Gastrocnemius medialis (tissue), 4 donors: ENCODE measurements at regions of chr19 and their contacts with region 1.

Region 1: DNA sequence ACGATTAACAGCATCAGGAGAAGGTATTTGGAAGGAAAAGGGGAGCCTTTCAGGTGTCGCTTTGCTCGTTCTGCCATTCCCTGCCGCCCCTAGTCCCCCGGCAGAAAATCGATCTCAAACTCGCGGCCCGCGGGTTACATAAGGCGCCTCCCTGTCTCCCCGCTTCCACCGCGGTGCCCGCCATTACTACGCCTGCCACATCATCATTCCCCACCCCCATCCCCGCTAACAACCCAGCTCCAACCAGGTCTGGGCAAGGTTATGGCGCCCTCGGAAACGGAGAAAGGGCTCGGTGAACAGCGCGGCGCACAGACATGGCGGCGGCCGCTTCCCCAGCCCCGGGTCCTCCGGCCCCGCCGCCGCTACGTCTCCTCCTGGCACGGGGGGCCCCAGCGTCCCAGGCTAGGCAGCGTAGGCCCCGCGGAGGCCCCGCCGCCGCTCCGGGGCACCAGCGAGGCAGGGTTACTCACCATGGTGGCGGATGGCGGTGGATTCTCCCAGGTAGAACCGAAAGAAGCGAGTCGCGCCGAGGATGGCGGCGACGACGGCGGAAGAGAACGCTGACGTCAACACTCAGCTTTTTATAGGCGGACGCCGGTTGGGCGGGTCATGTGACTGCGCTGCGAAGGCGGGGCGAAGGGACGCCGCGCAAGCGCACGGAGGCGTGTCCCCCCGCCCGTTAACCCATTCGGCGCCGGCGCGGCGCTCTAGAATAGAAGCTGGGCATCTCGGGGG is at the start of gene EEF2:
- DNase-seq: peak; percentile 77 to 86
- ATAC-seq: peak; percentile 49 to 61
- H3K4me3 ChIP-seq: peak within 1 kb of the TSS; percentile 79 to 99 (median 80)
- H3K27ac ChIP-seq: peak within 1 kb of the TSS; percentile 89 to 100 (median 92)
- H3K4me1 ChIP-seq: peaks cover 39 to 44% of the 10 kb centered on the region in 2 donors
- H3K27me3 ChIP-seq: no peaks in the 10 kb centered on the region
- CTCF ChIP-seq: peak in 1 of 5 experiments; percentile 28
- POLR2A ChIP-seq: peak; percentile 100
- total RNA-seq, gene EEF2: 1,701 to 2,714 (median 2,440) TPM

Region 2: DNA sequence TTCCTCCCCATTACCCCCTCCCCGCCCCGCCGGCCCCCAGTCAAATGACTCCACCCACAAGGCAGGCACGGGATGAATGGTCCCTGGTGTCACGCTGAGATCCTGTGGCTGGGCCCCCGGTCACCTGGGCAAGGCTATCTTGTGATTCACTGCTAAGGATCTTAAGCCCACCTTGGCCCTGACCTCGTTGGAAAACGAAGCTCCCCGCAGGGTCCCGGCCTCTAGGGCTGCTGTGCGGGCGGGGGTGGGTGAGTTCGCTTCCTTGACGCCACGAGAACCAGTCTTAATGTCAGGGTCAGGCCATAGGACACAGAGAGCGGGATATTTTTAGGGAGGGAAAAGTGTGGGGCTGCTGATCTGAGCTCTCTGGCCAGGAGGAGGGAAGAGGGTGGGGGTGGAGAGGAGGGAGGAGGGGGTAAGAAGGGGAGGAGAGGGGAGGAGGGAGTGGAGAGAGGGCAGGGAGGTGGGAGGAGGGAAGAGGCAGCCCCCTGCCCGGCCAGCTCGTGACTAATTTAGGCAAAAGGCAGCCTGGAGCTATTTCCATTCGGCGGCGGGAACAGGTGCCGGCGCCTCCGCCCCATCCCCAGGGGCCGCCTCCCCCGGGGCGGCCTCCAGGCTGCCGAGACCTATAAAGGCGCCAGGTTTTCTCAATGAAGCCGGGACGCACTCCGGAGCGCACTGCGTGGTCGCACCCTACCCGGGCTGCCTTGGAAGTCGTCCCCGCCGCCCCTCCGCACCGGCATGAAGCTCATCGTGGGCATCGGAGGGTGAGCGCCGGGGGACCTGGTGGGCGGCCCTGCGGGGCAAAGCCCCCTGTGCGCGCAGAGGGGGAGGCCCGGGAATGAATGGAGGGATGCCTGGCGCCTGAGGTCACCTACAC is 51.9 kb before region 1 on chr19 and contains the start of gene NMRK2:
- in situ Hi-C with region 1: no loop called
- intact Hi-C with region 1: loop called (anchors 2 kb)
- DNase-seq: peak; percentile 65 to 86
- ATAC-seq: peak; percentile 51 to 56
- H3K4me3 ChIP-seq: peak within 1 kb of the TSS in 3 of 4 donors; percentile 34 to 41 (median 38)
- H3K27ac ChIP-seq: peak within 1 kb of the TSS; percentile 85 to 92 (median 89)
- H3K4me1 ChIP-seq: peaks cover 0 to 14% of the 10 kb centered on the region in 2 donors
- H3K27me3 ChIP-seq: no peaks in the 10 kb centered on the region
- CTCF ChIP-seq: no peak
- POLR2A ChIP-seq: peak; percentile 42 to 58
- total RNA-seq, gene NMRK2: 46.3 to 168 (median 106) TPM

Region 3: DNA sequence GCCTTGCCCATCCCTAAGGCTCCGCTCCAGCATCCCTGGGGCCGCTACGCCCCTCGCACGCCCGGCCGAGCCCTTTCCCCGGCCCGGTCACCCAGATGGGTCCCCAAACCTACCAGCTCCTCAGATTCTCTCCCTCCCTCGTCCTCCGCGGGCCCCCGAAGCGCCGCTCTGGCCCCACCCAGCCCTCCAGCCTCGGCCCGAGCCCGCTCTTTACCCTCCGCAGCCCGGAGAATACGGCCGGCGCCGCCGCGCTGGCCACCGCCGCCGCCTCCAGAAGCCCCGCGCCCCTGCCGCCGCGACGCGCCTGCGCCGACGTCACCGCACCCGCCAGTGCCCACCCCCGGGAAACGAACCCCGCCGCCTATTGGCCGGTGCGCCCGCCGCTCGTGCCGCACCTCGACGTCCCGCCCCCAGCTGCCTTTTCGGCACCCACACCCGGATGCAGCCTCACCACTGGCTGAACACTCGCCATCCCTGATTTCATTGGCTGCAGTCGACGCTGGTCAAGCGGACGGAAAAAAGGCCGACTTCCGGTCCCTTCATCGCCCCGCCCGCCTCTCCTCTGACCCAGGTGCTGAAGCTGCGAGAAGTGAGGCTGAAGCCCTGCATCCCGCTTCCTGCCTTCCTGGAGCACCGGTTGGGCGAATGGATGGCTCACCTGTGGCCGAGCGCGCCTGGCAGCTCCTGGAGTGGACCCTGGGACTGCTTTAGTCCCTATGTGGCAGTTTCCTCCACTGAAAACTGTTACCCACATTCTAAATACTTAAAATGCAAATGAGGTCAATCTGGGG is 14.1 kb before region 1 on chr19 and contains the start of gene DAPK3:
- in situ Hi-C with region 1: no loop called
- intact Hi-C with region 1: loop called (anchors 1 kb)
- DNase-seq: peak; percentile 98
- ATAC-seq: peak; percentile 74 to 78
- H3K4me3 ChIP-seq: peak within 1 kb of the TSS; percentile 79 to 98 (median 90)
- H3K27ac ChIP-seq: peak within 1 kb of the TSS; percentile 97 to 100 (median 98)
- H3K4me1 ChIP-seq: peaks cover 42 to 43% of the 10 kb centered on the region in 2 donors
- H3K27me3 ChIP-seq: no peaks in the 10 kb centered on the region
- CTCF ChIP-seq: peak in 3 of 5 experiments; percentile 20 to 42 (median 26)
- POLR2A ChIP-seq: peak; percentile 100
- total RNA-seq, gene DAPK3: 61.3 to 135 (median 115) TPM

Region 4: DNA sequence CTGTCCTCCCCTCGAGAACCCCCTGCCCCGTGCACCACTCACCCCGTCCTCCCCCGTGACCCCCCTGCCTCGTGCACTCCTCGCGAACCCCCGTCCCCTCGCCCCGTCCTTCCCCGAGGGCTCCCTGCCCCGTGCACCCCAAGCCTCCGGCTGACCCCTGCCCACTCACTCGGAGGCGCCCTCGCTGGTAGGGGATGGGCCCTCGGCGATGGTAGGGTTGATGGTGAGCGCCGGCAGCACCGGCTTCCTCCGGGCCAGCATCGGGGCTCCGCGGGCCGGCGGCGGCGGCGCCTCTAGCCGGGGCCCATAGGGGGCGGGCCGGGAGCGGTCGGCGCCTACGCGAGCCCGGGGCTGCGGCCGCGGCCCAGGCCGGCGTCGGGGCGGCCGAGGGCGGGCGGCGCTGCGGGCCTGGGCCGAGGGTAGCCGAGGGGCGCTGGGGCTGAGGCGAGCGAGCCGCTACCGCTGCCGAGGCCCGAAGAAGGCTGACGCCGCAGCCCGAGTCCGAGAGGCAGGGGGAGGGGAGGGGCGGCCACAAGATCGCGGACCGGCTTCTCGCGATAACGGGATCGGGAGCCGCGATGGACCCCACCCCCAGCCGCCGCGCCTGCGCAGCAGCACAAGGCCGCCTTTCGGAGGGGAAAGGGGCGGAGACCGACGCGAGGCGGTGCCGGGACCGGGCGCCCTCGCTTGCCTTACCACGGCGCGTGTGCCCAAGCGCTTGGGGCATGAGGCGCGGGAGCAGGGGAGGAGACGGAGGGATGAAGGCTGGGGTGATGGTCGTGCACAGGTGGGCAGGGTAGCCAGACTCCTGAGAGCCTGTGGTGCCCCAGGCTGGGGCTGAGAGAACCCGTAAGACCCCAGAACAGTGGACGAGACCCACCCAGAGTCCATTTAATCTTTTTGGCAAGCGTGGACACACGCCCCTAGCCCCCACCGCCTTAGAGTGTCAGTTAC is 138.8 kb after region 1 on chr19 and contains the start of gene MAP2K2:
- in situ Hi-C with region 1: no loop called
- intact Hi-C with region 1: loop called (anchors 2 kb)
- DNase-seq: peak; percentile 90 to 92
- ATAC-seq: peak; percentile 95 to 97
- H3K4me3 ChIP-seq: peak within 1 kb of the TSS; percentile 78 to 98 (median 90)
- H3K27ac ChIP-seq: peak within 1 kb of the TSS; percentile 77 to 86 (median 82)
- H3K4me1 ChIP-seq: peaks cover 8 to 17% of the 10 kb centered on the region in 2 donors
- H3K27me3 ChIP-seq: no peaks in the 10 kb centered on the region
- CTCF ChIP-seq: peak in 3 of 5 experiments; percentile 5 to 33 (median 9)
- POLR2A ChIP-seq: peak; percentile 45 to 73
- total RNA-seq, gene MAP2K2: 101 to 207 (median 138) TPM

Region 5: GRCh38 chr19:4182084-4182810 is 197.2 kb after region 1 on chr19 and contains the starts of genes ANKRD24 and SIRT6:
- in situ Hi-C with region 1: no loop called
- intact Hi-C with region 1: loop called (anchors 5 kb)
- DNase-seq: peak; percentile 92 to 95
- ATAC-seq: peak; percentile 86 to 94
- H3K4me3 ChIP-seq: peak within 1 kb of the TSS; percentile 83 to 98 (median 96)
- H3K27ac ChIP-seq: peak within 1 kb of the TSS; percentile 87 to 96 (median 90)
- H3K4me1 ChIP-seq: peaks cover 28 to 29% of the 10 kb centered on the region in 2 donors
- H3K27me3 ChIP-seq: no peaks in the 10 kb centered on the region
- CTCF ChIP-seq: peak in 1 of 5 experiments; percentile 5
- POLR2A ChIP-seq: peak; percentile 82 to 83
- total RNA-seq, gene ANKRD24: 0.13 to 3.0 (median 0.45) TPM
- total RNA-seq, gene SIRT6: 11.7 to 25.7 (median 13.7) TPM